ENCODE measurements at regions of chr19 and their contacts with region 1.

Region 1: DNA sequence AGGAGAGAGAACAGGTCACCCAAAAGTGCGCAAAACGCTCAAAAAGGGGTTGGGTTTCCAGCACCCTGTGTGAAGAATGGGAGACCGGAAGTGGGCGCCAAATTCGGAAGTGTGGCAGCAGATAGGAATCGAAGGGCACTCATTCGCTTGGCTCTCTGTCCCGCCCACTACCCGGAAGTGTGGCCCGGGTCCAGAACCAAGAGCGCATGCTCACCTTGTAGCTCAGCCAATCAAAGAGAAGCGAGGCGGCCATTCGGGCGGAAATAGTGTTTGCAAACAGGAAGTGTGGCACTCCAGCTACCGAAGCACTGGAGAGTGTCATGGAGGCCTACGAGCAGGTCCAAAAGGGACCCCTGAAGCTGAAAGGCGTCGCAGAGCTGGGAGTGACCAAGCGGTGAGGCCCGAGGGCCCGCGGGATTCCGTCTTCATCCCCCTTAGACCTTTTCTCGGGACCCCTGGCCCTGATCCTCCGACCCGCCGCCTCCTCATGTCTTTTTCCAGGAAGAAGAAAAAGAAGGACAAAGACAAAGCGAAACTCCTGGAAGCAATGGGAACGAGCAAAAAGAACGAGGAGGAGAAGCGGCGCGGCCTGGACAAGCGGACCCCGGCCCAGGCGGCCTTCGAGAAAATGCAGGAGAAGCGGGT is at the start of gene FAM32A:
- DNase-seq: peak; percentile 99
- H3K4me3 ChIP-seq: peak within 1 kb of the TSS; percentile 88
- H3K27ac ChIP-seq: peak within 1 kb of the TSS; percentile 42
- H3K4me1 ChIP-seq: peaks cover 42% of the 10 kb centered on the region
- CTCF ChIP-seq: no peak
- total RNA-seq, gene FAM32A: 71.0 and 104 TPM in 2 replicates

Region 2: GRCh38 chr19:15629003-15629880 is 556.0 kb before region 1 on chr19:
- CTCF ChIA-PET with region 1: no interaction called
- POLR2A ChIA-PET with region 1: no interaction called
- intact Hi-C with region 1: loop called (anchors 1 kb)
- DNase-seq: peak; percentile 73
- H3K4me3 ChIP-seq: no peak overlapping the region
- H3K27ac ChIP-seq: no peak overlapping the region
- H3K4me1 ChIP-seq: no peaks in the 10 kb centered on the region
- CTCF ChIP-seq: peak; percentile 97

Region 3: GRCh38 chr19:16066611-16067104 is 118.6 kb before region 1 on chr19:
- CTCF ChIA-PET with region 1: interaction called, 6 read pairs
- POLR2A ChIA-PET with region 1: interaction called, 4 read pairs
- intact Hi-C with region 1: loop called (anchors 1 kb)
- DNase-seq: peak; percentile 72
- H3K4me3 ChIP-seq: no peak overlapping the region
- H3K27ac ChIP-seq: no peak overlapping the region
- H3K4me1 ChIP-seq: peaks cover 23% of the 10 kb centered on the region
- CTCF ChIP-seq: peak; percentile 81

Region 4: GRCh38 chr19:16118489-16119033 is 66.7 kb before region 1 on chr19:
- CTCF ChIA-PET with region 1: no interaction called
- POLR2A ChIA-PET with region 1: interaction called, 3 read pairs
- intact Hi-C with region 1: loop called (anchors 1 kb)
- DNase-seq: peak; percentile 96
- H3K4me3 ChIP-seq: peak overlapping the region; percentile 54
- H3K27ac ChIP-seq: peak overlapping the region; percentile 99
- H3K4me1 ChIP-seq: peaks cover 65% of the 10 kb centered on the region
- CTCF ChIP-seq: no peak

Region 5: GRCh38 chr19:16197622-16198369 is 12.6 kb after region 1 on chr19 and contains the start of gene AP1M1:
- CTCF ChIA-PET with region 1: interaction called, 5 read pairs
- POLR2A ChIA-PET with region 1: interaction called, 12 read pairs
- intact Hi-C with region 1: no loop called
- DNase-seq: peak; percentile 98
- H3K4me3 ChIP-seq: peak within 1 kb of the TSS; percentile 89
- H3K27ac ChIP-seq: peak within 1 kb of the TSS; percentile 54
- H3K4me1 ChIP-seq: peaks cover 24% of the 10 kb centered on the region
- CTCF ChIP-seq: no peak
- total RNA-seq, gene AP1M1: 68.4 and 92.9 TPM in 2 replicates

Region 6: DNA sequence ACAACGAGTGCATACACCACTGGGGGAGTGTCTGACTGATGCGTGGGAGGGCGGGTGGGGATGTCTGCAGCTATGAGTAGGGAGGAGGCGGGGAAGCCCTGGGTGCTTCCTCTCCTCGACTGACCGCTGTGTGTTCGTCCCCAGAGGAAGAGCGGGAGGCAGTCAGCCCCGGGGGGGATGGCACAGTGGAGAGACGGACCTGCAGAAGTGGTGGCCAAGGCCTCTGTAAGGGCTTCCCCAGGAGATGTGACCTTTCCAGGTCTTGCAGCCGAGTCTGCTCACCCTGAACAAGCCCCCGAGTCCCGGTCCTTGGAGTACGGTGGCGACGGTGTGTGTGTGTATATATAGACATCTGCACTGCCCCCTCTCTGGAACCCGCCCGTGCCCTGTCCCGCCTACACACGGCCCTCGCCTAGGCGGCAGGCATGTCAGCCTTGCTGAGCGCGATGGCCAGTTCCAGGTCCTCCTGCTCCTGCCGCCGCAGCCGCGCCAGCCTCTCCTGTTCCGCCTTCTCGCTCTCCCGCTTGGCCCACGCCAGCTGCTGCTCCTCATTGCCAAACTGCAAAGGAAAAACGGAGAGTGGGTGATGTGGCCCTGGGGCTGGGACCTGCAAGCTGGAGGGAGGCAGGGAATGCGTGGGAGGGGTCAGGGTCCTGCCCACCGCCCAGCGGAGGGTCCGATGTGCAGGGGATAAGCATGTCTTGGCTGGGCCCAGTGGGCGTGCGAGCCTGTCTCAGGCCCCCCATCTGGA is 170.2 kb after region 1 on chr19:
- CTCF ChIA-PET with region 1: no interaction called
- POLR2A ChIA-PET with region 1: no interaction called
- intact Hi-C with region 1: no loop called
- DNase-seq: no peak
- H3K4me3 ChIP-seq: no peak overlapping the region
- H3K27ac ChIP-seq: no peak overlapping the region
- H3K4me1 ChIP-seq: peaks cover 7% of the 10 kb centered on the region
- CTCF ChIP-seq: no peak

Measured in OCI-LY7 (cell line).